ENCODE measurements at regions of chr18 and their contacts with region 1.

Region 1: DNA sequence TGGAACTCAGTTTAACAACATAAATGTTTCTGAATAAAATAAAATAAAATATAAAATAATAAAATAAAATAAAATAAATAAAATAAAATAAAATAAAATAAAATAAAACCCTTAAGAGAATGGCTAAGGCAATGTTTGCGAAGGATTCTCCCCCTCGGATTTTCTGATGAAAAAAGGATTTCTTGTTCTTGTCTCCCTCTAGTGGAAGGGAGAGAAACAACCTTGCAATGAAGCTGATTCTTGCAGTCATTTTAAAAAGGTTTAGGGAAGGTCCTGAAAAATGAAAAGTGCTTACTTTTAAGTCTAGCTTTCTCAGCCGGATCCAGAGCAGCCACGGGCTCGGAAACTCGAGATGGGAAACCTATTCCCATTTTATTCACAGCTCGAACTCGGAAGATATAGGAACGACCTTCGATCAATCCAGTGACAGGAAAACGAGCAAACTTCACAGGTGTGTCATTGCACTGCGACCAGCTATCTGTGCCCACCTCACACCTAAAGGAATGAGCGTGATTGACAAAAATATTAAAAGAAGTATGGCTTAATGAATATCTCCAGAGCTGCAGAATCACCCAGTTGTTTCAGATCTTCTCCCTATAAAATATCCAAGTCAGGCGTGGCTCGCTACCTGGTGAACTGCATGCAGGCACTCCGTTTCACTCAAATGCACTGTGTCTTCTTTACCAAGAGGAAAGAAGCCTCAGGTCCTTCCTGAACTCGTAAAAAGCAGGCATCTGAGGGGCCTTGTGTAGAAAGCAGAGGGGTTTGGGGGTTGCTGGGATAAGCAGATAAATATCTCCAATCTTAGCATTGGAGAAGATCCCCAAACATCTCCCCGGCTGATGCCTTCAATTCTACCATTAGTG is 68.1 kb downstream of the MYOM1 start:
- DNase-seq: no peak
- H3K4me3 ChIP-seq: peak overlapping the region; percentile 25
- H3K27ac ChIP-seq: no peak overlapping the region
- H3K4me1 ChIP-seq: no peaks in the 10 kb centered on the region
- H3K27me3 ChIP-seq: no peaks in the 10 kb centered on the region
- CTCF ChIP-seq: peak; percentile 85

Region 2: GRCh38 chr18:3115447-3116029 is 36.1 kb before region 1 on chr18:
- intact Hi-C with region 1: loop called (anchors 2 kb)
- DNase-seq: no peak
- H3K4me3 ChIP-seq: no peak overlapping the region
- H3K27ac ChIP-seq: no peak overlapping the region
- H3K4me1 ChIP-seq: no peaks in the 10 kb centered on the region
- H3K27me3 ChIP-seq: no peaks in the 10 kb centered on the region
- CTCF ChIP-seq: no peak